GM10248 (cell line): ENCODE measurements at regions of chr12 and their contacts with region 1.

Region 1: GRCh38 chr12:129911428-129912049 is 7.7 kb upstream of the TMEM132D start:
- DNase-seq: peak; percentile 64
- CTCF ChIP-seq: peak; percentile 95

Region 2: GRCh38 chr12:128644664-128645296 is 1266.8 kb before region 1 on chr12:
- CTCF ChIA-PET with region 1: interaction called, 28 read pairs
- POLR2A ChIA-PET with region 1: no interaction called
- DNase-seq: peak; percentile 48
- CTCF ChIP-seq: peak; percentile 91

Region 3: DNA sequence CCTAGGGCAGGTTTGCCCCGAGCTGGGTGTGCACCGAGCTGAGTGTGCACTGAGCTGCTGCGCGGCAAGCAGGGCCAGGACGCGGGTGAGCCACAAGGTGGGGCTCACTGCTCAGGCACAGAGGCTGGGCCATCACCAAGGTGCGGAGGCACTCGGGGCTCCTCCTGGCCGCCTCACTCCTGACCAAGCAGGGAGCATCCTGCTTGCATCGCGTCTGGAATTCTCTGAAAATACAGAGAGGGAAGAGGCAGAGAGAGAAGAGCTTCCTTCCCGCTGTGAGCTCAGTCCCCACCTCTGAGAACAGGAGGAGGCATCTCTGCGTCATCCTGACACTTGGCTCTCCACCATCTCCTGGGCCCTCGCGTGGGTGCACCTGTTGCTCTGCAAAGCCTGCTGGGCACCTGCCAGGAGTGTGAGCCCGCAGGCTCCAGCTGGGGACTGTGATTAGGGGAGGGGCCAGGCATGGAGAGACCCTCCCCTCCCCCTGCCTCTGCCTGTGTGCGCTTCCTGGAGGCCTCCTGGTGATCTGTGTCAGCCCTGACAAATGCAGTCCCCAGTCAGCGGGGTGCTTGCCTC is 942.0 kb before region 1 on chr12:
- CTCF ChIA-PET with region 1: interaction called, 11 read pairs
- POLR2A ChIA-PET with region 1: no interaction called
- DNase-seq: peak; percentile 72
- CTCF ChIP-seq: peak; percentile 91

Region 4: DNA sequence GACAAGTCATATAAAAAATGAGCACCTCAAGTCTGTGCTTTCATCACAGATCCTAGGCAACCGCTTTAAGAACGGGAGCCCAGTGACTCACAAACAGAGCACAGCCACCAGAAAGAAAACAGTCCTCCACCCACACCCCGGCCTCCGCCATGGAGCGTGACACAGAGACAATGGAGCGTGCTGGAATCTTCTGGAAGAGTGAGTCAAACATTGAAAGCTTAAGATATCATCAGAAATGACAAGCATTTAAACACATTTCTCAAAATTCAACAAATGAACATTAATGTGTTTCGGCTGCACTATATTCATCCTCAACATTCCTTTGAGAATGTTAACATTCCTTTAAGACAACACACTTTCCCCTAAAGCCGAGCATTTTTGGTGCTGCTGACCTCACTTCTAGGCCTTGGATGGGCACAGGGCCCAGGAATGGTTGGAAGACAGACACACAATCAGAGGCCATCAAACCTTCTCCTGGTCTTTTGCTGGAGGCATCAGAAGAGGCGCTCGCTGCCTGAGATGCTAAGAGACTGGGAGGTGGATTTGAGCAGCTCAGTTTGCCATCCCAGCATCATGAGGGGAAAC is 15.9 kb after region 1 on chr12:
- CTCF ChIA-PET with region 1: no interaction called
- POLR2A ChIA-PET with region 1: no interaction called
- DNase-seq: no peak
- CTCF ChIP-seq: no peak

Region 5: GRCh38 chr12:129938089-129938488 is 26.6 kb after region 1 on chr12:
- CTCF ChIA-PET with region 1: no interaction called
- POLR2A ChIA-PET with region 1: no interaction called
- DNase-seq: no peak
- CTCF ChIP-seq: no peak